H1 (cell line): ENCODE measurements at regions of chr20 and their contacts with region 1.

Region 1: DNA sequence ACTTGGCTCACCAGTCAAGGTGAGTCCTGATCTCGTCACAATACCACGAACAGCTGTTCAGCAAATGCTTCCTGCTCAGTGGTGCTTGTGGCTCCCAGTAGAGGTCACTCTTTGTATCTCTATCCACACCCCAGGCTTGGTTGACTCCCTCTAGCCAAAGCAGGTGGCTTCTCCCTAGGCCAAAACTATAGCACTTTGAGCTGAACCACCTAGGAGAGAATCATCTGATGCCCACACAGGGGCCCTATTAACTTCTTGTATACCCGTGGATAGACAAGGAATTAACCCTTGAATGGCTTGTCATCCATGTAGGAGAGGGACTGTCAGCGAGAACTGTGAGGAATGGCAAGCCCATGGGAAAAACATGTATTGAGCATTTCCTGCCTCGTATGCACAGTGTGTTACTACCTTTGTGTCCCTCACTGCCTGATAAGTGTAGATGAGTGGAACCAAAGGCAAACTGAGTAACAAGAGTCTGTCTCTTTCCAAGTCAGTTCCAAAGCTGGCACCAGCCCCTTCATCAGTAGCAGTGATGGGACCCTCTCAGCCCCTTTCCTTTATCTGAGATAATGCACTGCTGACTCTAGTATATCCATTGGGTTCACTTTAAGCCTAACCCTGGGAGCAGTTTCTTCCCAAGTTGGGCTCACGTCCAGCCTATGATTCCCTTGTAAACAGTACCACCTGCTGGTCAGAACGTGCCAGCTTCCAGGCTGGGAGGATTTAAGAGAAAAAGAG is 42.5 kb downstream of the EIF2S2 start:
- DNase-seq: peak; percentile 53 to 79
- H3K4me3 ChIP-seq: no peak overlapping the region
- H3K27ac ChIP-seq: no peak overlapping the region
- H3K4me1 ChIP-seq: peaks cover 0 to 9% (median 5%) of the 10 kb centered on the region in 4 experiments; a peak in 5 of 7 replicates
- H3K27me3 ChIP-seq: no peaks in the 10 kb centered on the region
- CTCF ChIP-seq: peak; percentile 57 to 94 (median 89)
- EP300 ChIP-seq: no peak
- POLR2A ChIP-seq: no peak
- RAD21 ChIP-seq: peak; percentile 96 to 98

Region 2: DNA sequence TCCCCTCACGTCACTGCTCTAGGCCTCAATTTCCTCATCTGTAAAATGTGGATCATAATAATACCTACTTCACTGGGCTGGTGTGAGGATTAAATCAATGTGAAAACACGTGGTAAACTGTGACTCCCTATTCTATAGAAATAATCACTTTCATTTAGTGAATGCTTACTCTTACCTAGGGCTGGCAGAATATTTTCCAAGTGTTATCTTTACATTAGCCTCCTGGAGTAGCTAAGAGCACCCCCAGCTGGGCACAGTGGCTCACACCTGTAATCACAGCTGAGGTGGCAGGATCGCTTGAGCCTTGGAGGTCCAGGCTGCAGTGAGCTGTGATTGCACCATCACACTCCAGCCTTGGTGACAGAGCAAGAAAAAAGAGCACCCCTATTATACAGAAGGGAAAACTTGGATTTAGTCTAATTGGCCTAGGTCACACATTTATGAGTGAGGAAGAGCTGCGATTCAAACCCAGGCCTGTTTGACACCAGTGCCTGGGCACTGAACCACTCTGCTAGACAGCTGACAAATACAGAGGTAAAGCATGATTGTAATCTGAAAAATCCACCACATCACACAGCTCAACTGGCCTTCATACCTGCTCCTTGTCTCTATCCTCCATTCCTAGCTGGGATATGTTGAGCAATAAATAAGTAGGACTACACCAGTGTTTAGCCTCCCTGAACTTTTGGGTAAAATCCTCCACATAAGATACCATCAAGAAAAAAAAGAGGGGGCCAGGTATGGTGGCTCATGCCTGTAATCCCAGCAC is 624.5 kb before region 1 on chr20:
- CTCF ChIA-PET with region 1: no interaction called
- POLR2A ChIA-PET with region 1: no interaction called
- DNase-seq: no peak
- H3K4me3 ChIP-seq: peak overlapping the region in 3 of 4 experiments; percentile 28 to 71 (median 32); a peak in 5 of 8 replicates
- H3K27ac ChIP-seq: no peak overlapping the region
- H3K4me1 ChIP-seq: peaks cover 0 to 7% (median 3%) of the 10 kb centered on the region in 4 experiments; a peak in 4 of 7 replicates
- H3K27me3 ChIP-seq: peaks cover 3 to 18% (median 15%) of the 10 kb centered on the region in 4 experiments
- CTCF ChIP-seq: peak; percentile 17 to 42 (median 37); a peak in 2 of 4 replicates
- EP300 ChIP-seq: no peak
- POLR2A ChIP-seq: no peak
- RAD21 ChIP-seq: peak in 1 of 2 experiments; percentile 41; a peak in 2 of 4 replicates

Region 3: DNA sequence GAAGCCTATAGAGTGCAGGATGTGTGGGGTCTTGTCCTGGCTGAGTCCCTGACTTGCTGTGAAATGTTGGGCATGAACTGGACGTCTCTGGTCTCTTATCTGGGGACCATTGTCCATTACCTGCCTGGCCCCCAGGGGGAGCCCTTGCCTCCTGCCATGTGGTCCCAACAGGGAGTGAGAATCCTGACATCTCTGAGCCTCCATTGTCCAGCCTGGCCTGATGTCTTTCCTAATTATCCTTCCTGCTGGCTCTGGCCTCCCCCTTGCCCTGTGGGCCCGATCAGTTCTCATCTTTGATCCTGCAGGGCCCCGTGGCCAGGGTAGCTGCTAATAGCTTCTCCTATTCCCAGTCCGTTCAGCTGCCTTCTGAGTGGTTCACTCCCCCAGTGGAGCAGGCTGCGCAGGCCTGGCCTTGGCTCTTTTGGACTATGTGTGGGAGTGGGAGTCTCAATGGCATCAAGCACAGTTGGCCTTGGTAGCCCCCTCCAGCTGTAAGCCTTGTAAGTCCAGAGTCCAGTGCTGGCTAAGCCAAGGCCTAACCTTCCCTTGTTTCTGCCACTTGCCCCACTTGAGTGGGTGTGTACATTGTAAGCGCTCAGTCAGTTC is 153.7 kb before region 1 on chr20:
- CTCF ChIA-PET with region 1: interaction called, 38 read pairs
- POLR2A ChIA-PET with region 1: no interaction called
- DNase-seq: peak in 1 of 2 experiments; percentile 85
- H3K4me3 ChIP-seq: no peak overlapping the region
- H3K27ac ChIP-seq: no peak overlapping the region
- H3K4me1 ChIP-seq: no peaks in the 10 kb centered on the region
- H3K27me3 ChIP-seq: no peaks in the 10 kb centered on the region
- CTCF ChIP-seq: peak; percentile 76 to 92 (median 85)
- EP300 ChIP-seq: no peak
- POLR2A ChIP-seq: no peak
- RAD21 ChIP-seq: peak; percentile 50 to 66

Region 4: GRCh38 chr20:33940666-33941065 is 128.8 kb before region 1 on chr20:
- CTCF ChIA-PET with region 1: interaction called, 78 read pairs
- POLR2A ChIA-PET with region 1: no interaction called
- DNase-seq: no peak
- H3K4me3 ChIP-seq: no peak overlapping the region
- H3K27ac ChIP-seq: no peak overlapping the region
- H3K4me1 ChIP-seq: no peaks in the 10 kb centered on the region
- H3K27me3 ChIP-seq: no peaks in the 10 kb centered on the region
- CTCF ChIP-seq: no peak
- EP300 ChIP-seq: no peak
- POLR2A ChIP-seq: no peak
- RAD21 ChIP-seq: no peak

Region 5: GRCh38 chr20:33963751-33964150 is 105.8 kb before region 1 on chr20:
- CTCF ChIA-PET with region 1: interaction called, 10 read pairs
- POLR2A ChIA-PET with region 1: interaction called, 3 read pairs
- DNase-seq: no peak
- H3K4me3 ChIP-seq: no peak overlapping the region
- H3K27ac ChIP-seq: no peak overlapping the region
- H3K4me1 ChIP-seq: no peaks in the 10 kb centered on the region
- H3K27me3 ChIP-seq: no peaks in the 10 kb centered on the region
- CTCF ChIP-seq: no peak
- EP300 ChIP-seq: no peak
- POLR2A ChIP-seq: no peak
- RAD21 ChIP-seq: no peak

Region 6: GRCh38 chr20:34037121-34037520 is 32.4 kb before region 1 on chr20:
- CTCF ChIA-PET with region 1: interaction called, 18 read pairs
- POLR2A ChIA-PET with region 1: no interaction called
- DNase-seq: no peak
- H3K4me3 ChIP-seq: no peak overlapping the region
- H3K27ac ChIP-seq: no peak overlapping the region
- H3K4me1 ChIP-seq: peaks cover 3 to 14% (median 8%) of the 10 kb centered on the region in 4 experiments; a peak in 5 of 7 replicates
- H3K27me3 ChIP-seq: no peaks in the 10 kb centered on the region
- CTCF ChIP-seq: no peak
- EP300 ChIP-seq: no peak
- POLR2A ChIP-seq: no peak
- RAD21 ChIP-seq: no peak

Region 7: GRCh38 chr20:34058831-34059230 is 10.7 kb before region 1 on chr20:
- CTCF ChIA-PET with region 1: interaction called, 13 read pairs
- POLR2A ChIA-PET with region 1: interaction called, 3 read pairs
- DNase-seq: no peak
- H3K4me3 ChIP-seq: no peak overlapping the region
- H3K27ac ChIP-seq: no peak overlapping the region
- H3K4me1 ChIP-seq: no peaks in the 10 kb centered on the region
- H3K27me3 ChIP-seq: no peaks in the 10 kb centered on the region
- CTCF ChIP-seq: no peak
- EP300 ChIP-seq: no peak
- POLR2A ChIP-seq: no peak
- RAD21 ChIP-seq: no peak

Region 8: DNA sequence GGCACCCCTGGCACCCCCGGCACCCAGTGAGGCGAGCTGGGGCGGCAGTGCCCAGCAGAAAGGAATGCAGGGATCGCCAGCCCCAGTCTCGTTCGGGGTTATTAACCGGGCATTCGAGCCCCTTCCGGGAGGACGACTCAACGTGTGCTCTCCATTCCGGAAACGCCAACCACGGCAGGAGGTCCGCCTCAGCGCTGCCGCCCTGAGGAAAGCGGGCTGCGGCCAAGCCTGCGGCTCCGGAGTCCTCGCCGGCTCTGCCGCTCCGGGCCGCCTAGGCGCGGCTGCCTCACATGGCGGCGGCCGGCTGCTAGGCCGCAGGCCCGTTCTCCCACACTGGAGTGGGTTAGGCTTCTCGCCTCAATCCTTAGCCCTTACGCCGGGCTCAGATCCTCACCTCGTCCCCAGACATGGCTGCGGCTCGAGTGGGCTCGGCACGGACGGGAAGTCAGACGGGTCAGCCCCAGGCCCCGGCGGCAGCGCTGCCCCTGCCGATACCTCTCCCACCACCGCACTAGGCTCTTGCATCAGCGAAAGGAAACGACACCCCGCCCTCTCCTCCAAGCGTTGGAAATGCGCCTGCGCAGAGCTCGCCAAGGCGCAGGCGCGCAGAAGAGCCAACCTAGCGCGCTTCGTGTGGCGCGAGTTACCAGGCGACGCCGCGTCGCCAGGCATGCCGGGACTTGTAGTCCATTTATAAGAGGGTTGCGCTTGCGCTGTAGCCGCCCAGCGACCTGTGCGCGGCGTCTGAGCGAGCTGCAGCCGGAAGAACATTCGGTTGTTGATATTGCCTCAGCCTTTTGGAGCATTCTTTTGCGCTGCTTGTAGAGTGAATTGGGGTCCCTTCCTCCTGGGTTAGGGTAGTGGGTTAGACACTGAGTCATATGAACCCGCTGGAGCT is 42.4 kb after region 1 on chr20 and contains the start of gene EIF2S2:
- CTCF ChIA-PET with region 1: interaction called, 3 read pairs
- POLR2A ChIA-PET with region 1: interaction called, 14 read pairs
- DNase-seq: peak; percentile 90 to 99
- H3K4me3 ChIP-seq: peak within 1 kb of the TSS; percentile 96 to 99 (median 98)
- H3K27ac ChIP-seq: peak within 1 kb of the TSS; percentile 99
- H3K4me1 ChIP-seq: peaks cover 0 to 6% (median 0%) of the 10 kb centered on the region in 4 experiments; a peak in 3 of 7 replicates
- H3K27me3 ChIP-seq: no peaks in the 10 kb centered on the region
- CTCF ChIP-seq: no peak
- EP300 ChIP-seq: no peak
- POLR2A ChIP-seq: peak; percentile 95 to 96
- RAD21 ChIP-seq: no peak
- total RNA-seq, gene EIF2S2: 133 and 142 TPM in 2 replicates

Region 9: GRCh38 chr20:34190679-34191090 is 121.2 kb after region 1 on chr20:
- CTCF ChIA-PET with region 1: no interaction called
- POLR2A ChIA-PET with region 1: no interaction called
- DNase-seq: peak; percentile 67 to 84
- H3K4me3 ChIP-seq: no peak overlapping the region
- H3K27ac ChIP-seq: no peak overlapping the region
- H3K4me1 ChIP-seq: peaks cover 0 to 6% (median 3%) of the 10 kb centered on the region in 4 experiments; a peak in 4 of 7 replicates
- H3K27me3 ChIP-seq: no peaks in the 10 kb centered on the region
- CTCF ChIP-seq: peak; percentile 89 to 97 (median 89)
- EP300 ChIP-seq: no peak
- POLR2A ChIP-seq: 0 out of 3 replicates have a peak, but pooled peaks of 1 of the 2 experiments have one; percentile 24
- RAD21 ChIP-seq: peak; percentile 96 to 98